Left ventricle myocardium superior (tissue), 1 donor: ENCODE measurements at regions of chr7 and their contacts with region 1.

Region 1: DNA sequence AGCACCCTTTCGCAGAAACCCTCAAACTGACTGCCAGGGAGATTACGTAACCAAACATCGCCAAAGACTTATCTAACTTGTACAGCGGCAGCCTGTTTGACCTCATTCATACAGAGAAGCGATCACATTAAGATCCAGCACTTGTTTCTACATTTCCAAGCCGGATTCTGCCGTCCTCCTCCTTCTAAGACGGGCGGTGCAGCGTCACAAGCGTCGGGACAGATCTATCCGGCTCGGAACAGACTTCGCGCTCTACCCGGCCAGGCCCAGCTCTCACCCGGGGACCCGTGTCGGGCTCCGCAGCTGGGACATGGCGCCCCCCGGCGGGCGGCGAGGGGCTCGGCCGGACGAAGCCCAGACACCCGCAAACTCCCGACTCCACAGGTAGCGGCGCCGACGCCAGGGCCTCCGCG is 373 bp downstream of the H2AZ2 start:
- DNase-seq: peak; percentile 93
- ATAC-seq: peak; percentile 79

Region 2: GRCh38 chr7:44587843-44588711 is 259.4 kb before region 1 on chr7:
- intact Hi-C with region 1: loop called (anchors 5 kb)
- DNase-seq: no peak
- ATAC-seq: peak; percentile 73